ENCODE measurements at regions of chr2 and their contacts with region 1.

Region 1: GRCh38 chr2:207481924-207482323 is 47.8 kb upstream of the CREB1 start:
- DNase-seq: no peak
- H3K4me3 ChIP-seq: no peak overlapping the region
- H3K27ac ChIP-seq: no peak overlapping the region
- H3K4me1 ChIP-seq: no peaks in the 10 kb centered on the region
- H3K27me3 ChIP-seq: no peaks in the 10 kb centered on the region
- CTCF ChIP-seq: no peak
- POLR2A ChIP-seq: no peak

Region 2: DNA sequence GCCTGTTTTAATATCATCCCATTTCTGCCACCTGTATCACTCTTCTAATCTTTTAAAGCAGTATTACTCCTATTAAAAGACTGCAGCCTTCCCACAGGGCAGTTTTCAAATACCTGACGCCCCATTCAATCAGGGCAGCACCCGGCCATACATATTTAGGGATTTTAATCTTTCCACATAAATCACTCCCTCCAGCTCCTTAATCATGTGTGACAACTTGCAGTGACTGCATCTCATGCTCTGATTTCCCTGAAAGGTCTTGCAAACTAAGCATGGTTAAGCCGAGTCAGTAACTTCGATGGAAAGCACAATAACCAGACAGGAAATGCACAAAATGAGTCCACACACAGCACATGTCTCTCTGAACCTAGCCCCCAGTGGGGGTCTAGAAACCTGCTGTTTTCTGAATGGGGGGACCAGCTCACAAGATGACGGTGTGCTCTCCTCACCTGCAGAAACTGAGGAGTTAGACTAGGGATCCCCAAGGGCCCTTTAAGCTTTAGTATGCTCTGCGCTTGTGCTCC is 69.1 kb before region 1 on chr2:
- intact Hi-C with region 1: loop called (anchors 2 kb)
- DNase-seq: no peak
- H3K4me3 ChIP-seq: no peak overlapping the region
- H3K27ac ChIP-seq: no peak overlapping the region
- H3K4me1 ChIP-seq: no peaks in the 10 kb centered on the region
- H3K27me3 ChIP-seq: peaks cover 0 to 5% of the 10 kb centered on the region in 2 donors
- CTCF ChIP-seq: no peak
- POLR2A ChIP-seq: no peak

Region 3: DNA sequence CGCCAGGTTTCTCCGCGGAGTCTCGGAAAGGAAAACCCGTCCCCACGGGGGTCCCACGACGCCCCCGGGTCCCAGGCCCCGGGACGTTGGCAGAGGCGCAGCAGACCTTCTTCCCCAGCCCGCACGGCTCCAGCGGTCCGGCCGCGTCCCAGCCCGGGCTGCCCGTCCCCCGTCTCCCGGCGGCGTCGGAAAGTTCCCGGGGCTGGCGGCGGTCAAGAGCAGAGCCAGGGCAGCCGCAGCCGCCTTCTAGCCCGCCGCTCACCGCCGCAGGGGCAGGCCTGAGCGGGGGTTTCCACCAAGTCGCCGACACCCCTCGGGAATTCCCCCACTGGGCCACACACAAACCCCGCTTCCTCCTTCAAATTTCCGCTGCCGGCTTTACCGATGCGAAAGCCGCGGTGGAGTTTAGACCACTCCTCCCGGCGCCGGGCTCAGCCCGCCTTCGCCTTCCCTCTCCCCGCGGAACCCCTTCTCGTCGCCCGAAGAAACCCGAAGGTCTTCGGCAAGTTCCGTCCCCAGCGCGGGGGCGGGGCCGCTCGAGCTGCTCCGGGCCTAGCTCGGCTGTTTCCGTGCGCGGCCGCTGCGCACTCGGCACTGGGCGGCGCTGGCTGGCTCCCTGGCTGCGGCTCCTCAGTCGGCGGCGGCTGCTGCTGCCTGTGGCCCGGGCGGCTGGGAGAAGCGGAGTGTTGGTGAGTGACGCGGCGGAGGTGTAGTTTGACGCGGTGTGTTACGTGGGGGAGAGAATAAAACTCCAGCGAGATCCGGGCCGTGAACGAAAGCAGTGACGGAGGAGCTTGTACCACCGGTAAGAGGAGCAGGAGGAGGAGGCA is 47.6 kb after region 1 on chr2 and contains the start of gene CREB1:
- intact Hi-C with region 1: loop called (anchors 2 kb)
- DNase-seq: peak; percentile 98
- H3K4me3 ChIP-seq: peak within 1 kb of the TSS; percentile 67 to 82 (median 72)
- H3K27ac ChIP-seq: peak within 1 kb of the TSS; percentile 98
- H3K4me1 ChIP-seq: no peaks in the 10 kb centered on the region
- H3K27me3 ChIP-seq: no peaks in the 10 kb centered on the region
- CTCF ChIP-seq: peak in 1 of 3 donors; percentile 25
- POLR2A ChIP-seq: peak; percentile 90
- total RNA-seq, gene CREB1: 45.6 to 81.5 (median 54.1) TPM